Activated CD4-positive, alpha-beta memory T cell treated with anti-CD3 and anti-CD28 coated beads for 36 hours (primary cell): ENCODE measurements at regions of chr1 and their contacts with region 1.

Region 1: GRCh38 chr1:66300972-66301451 is 232.9 kb upstream of the SGIP1 start:
- DNase-seq: peak; percentile 60
- H3K4me3 Mint-ChIP-seq: peak overlapping the region; percentile 65
- H3K27ac Mint-ChIP-seq: peak overlapping the region; percentile 77
- H3K4me1 Mint-ChIP-seq: peaks cover 50% of the 10 kb centered on the region
- H3K27me3 Mint-ChIP-seq: no peaks in the 10 kb centered on the region

Region 2: DNA sequence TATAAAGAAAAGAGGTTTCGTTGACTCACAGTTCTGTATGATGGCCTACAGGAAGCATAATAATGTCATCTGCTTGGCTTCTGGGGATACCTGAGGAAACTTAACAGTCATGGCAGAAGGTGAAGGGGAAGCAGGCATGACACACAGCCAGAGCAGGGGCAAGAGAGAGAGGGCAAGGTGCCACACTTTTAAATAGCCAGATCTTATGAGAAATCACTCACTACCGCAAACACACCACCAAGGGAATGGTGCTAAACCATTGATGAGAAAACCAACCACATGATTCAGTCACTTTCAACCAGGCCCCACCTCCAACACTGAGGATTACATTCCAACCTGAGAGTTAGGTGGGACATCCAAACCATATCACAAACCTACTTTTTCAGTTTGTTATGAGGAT is 13.0 kb before region 1 on chr1:
- CTCF ChIA-PET with region 1: no interaction called
- POLR2A ChIA-PET with region 1: interaction called, 6 read pairs
- intact Hi-C with region 1: loop called (anchors 1 kb)
- DNase-seq: peak; percentile 62
- H3K4me3 Mint-ChIP-seq: no peak overlapping the region
- H3K27ac Mint-ChIP-seq: peak overlapping the region; percentile 20
- H3K4me1 Mint-ChIP-seq: peaks cover 73% of the 10 kb centered on the region
- H3K27me3 Mint-ChIP-seq: no peaks in the 10 kb centered on the region

Region 3: DNA sequence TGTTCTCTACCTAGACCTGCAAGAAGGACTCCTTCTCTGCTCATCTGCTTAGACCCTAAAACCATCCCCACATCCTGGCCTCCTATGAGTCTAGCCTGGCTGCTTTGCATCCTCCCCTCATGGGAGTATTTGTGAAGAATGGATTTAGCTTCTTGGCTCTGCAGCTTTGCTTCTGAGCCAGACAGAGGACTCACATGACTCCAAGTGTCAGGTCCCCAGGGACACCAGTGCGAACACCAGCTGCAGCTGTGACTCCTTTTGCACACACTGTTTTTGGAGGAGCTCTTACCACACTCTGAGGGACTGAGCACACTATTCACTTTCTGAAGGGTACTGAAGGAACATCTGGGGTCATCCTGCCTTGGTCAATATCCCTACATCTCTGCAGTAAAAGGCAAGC is 101.2 kb after region 1 on chr1:
- CTCF ChIA-PET with region 1: no interaction called
- POLR2A ChIA-PET with region 1: no interaction called
- intact Hi-C with region 1: loop called (anchors 1 kb)
- DNase-seq: no peak
- H3K4me3 Mint-ChIP-seq: no peak overlapping the region
- H3K27ac Mint-ChIP-seq: no peak overlapping the region
- H3K4me1 Mint-ChIP-seq: peaks cover 31% of the 10 kb centered on the region
- H3K27me3 Mint-ChIP-seq: no peaks in the 10 kb centered on the region